ENCODE measurements at regions of chr19 and their contacts with region 1.

Region 1: DNA sequence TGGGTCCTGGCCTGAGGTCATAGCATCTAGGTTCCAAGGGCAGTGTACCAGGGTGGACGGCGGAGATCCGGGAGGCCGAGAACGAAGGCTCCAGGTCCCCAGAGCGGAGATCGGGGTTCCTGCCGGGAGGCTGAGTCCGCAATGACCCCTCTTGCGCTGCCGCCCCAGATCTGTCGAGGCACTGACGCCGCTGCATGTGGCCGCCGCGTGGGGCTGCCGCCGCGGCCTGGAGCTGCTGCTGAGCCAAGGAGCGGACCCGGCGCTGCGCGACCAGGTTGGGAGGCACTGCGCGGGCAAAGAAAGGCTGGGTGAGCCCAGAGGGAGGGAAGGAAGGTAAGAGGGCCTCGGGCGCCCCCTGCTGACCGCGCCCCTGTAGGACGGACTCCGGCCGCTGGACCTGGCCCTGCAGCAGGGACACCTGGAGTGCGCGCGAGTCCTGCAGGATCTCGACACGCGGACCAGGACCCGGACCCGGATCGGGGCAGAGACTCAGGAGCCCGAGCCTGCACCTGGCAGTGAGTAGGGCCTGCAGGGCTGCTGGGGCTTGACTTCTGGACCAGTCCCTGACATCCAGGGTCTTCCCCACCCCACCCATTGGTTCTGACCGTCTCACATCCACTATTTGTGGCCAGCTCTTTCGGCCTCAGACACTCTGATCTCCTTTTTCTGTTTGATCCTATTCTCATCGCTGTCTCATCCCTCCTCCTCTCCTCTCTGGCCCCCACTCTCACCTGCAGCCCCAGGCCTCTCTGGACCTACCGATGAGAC is 971 bp downstream of the ANKLE1 start:
- DNase-seq: peak; percentile 95

Region 2: GRCh38 chr19:16216744-16217670 is 1065.7 kb before region 1 on chr19:
- intact Hi-C with region 1: no loop called
- DNase-seq: no peak

Region 3: GRCh38 chr19:17205237-17206140 is 77.2 kb before region 1 on chr19:
- intact Hi-C with region 1: loop called in 1 of 2 experiments (anchors 5 kb)
- DNase-seq: no peak

Measured in posterior vena cava (tissue), 2 donors.